Uterus (tissue), 4 donors: ENCODE measurements at regions of chr1 and their contacts with region 1.

Region 1: GRCh38 chr1:212629450-212630157 is 21.0 kb downstream of the ATF3 start:
- DNase-seq: no peak
- H3K4me3 ChIP-seq: no peak overlapping the region
- H3K27ac ChIP-seq: no peak overlapping the region
- H3K4me1 ChIP-seq: no peaks in the 10 kb centered on the region
- H3K27me3 ChIP-seq: no peaks in the 10 kb centered on the region
- CTCF ChIP-seq: no peak
- POLR2A ChIP-seq: no peak

Region 2: GRCh38 chr1:212477014-212477679 is 152.5 kb before region 1 on chr1:
- intact Hi-C with region 1: loop called (anchors 5 kb)
- DNase-seq: peak; percentile 81 to 86
- H3K4me3 ChIP-seq: no peak overlapping the region
- H3K27ac ChIP-seq: no peak overlapping the region
- H3K4me1 ChIP-seq: no peaks in the 10 kb centered on the region
- H3K27me3 ChIP-seq: no peaks in the 10 kb centered on the region
- CTCF ChIP-seq: peak; percentile 81 to 89 (median 84)
- POLR2A ChIP-seq: no peak